ENCODE measurements at regions of chr1 and their contacts with region 1.

Region 1: DNA sequence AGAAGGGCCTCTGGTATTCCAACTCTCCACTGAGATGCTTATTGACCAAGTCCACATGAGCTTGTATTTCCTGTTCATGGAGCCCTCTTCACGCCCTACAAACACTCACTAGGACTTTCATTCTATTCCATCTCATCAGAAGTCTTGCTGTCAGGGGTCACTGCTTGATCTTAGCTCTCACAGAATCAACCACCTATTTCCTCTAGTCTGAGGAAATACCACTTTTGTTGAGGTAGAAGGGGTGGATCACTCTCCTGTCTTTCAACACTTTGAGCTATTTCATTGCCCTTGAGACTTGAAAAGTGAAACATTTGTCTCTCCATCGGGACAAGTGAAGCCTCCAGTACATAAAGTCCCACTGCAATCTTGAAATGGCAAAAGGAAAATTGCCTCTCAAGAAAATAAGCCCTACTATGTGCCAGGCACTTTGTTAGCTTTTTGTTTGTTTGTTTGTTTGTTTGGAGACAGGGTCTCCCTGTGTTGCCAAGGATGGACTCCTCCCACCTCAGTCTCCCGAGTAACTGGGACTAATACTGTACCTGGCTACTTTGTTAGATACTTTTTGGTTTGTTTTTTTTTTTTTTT is 19.8 kb upstream of the FAM110D start:
- H3K4me3 ChIP-seq: no peak overlapping the region
- H3K27ac ChIP-seq: no peak overlapping the region
- H3K4me1 ChIP-seq: no peaks in the 10 kb centered on the region
- CTCF ChIP-seq: no peak

Region 2: DNA sequence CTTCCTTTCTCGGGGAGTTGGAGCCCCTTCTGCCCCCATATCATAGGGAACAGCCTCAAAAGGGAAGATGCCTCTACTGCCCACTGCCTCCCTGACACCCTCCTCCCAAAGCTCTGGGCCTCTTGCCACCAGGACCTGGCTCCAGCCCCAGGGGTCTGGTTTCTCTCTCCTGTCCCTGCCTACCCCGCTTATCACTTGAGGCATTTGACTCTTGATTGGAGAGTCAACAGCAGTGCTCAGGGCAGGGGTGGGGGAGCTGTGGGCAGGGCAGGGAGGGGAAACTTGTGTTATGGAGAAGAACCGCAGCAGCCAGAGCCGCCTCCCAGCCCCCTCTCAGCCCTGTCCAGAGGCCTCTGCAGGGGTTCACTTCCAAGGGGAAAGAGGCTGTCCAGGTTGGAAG is 72.2 kb before region 1 on chr1:
- CTCF ChIA-PET with region 1: interaction called, 3 read pairs
- POLR2A ChIA-PET with region 1: interaction called, 11 read pairs
- H3K4me3 ChIP-seq: no peak overlapping the region
- H3K27ac ChIP-seq: no peak overlapping the region
- H3K4me1 ChIP-seq: no peaks in the 10 kb centered on the region
- CTCF ChIP-seq: no peak

Region 3: GRCh38 chr1:26126321-26127084 is 12.6 kb before region 1 on chr1:
- CTCF ChIA-PET with region 1: interaction called, 39 read pairs
- POLR2A ChIA-PET with region 1: no interaction called
- H3K4me3 ChIP-seq: no peak overlapping the region
- H3K27ac ChIP-seq: peak overlapping the region; percentile 21; the same call in 1 of the 2 replicates
- H3K4me1 ChIP-seq: peaks cover 10% of the 10 kb centered on the region; the same call in 1 of the 2 replicates
- CTCF ChIP-seq: no peak

Measured in HEK293 (cell line).